Right lobe of liver (tissue), 6 donors: ENCODE measurements at regions of chr6 and their contacts with region 1.

Region 1: DNA sequence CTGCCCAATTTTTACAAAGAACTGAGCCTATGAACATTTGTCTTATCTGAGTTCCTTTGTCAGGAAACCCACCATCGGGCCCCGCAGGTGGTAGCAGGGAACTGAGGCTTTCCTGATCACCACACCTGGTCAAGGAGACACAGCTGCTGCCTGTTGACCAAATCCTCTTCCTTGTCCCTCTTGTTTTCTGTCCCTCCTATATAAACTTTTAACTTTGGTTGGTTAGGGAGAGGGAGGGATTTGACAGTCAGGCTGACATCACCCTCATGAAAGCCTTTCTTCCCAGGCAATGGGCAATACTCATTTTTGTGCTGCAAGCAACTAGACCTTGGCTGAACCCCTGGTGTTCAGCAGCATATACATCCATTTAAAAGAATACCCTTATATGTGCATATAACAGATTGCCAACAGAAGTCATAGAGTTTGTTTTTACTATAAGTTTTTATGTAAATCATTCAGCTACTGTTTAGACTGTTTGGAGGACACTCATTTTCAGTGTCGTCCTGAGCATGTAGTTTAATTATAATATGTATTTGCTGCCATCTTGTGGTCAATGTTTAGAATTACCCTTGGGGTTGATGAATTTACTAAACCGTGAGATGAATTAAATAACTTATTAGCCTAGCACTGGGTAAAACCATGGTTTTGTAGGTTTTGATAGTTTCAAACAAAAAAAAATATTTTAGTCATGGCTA is 17.0 kb downstream of the CRISP1 start:
- DNase-seq: no peak
- ATAC-seq: peak; percentile 86 to 95 (median 90)
- H3K4me3 ChIP-seq: no peak overlapping the region
- H3K27ac ChIP-seq: no peak overlapping the region
- H3K4me1 ChIP-seq: no peaks in the 10 kb centered on the region
- H3K27me3 ChIP-seq: no peaks in the 10 kb centered on the region
- CTCF ChIP-seq: peak; percentile 62 to 88 (median 74)
- POLR2A ChIP-seq: no peak

Region 2: DNA sequence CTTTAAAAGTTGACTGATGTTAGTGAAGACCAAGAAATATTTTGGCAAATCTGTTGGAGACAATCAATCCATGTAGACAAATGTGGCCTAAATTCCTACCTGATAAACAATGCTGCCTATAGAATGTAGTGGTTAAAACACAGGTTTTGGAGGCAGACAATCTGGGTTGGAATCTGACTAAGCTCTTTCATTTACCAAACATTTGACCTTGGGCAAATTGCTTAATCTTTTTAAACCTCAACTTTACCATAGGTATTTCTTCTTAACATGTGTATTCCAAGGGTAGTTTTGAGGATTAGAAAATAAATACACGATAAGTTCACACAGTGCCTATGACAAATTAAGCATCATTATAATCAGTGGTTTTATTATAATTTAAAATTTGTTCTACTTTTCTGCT is 224.2 kb before region 1 on chr6:
- intact Hi-C with region 1: loop called in 1 of 2 experiments (anchors 10 kb)
- DNase-seq: no peak
- ATAC-seq: no peak
- H3K4me3 ChIP-seq: no peak overlapping the region
- H3K27ac ChIP-seq: no peak overlapping the region
- H3K4me1 ChIP-seq: no peaks in the 10 kb centered on the region
- H3K27me3 ChIP-seq: no peaks in the 10 kb centered on the region
- CTCF ChIP-seq: no peak
- POLR2A ChIP-seq: no peak